IMR-90 (cell line): ENCODE measurements at regions of chr21 and their contacts with region 1.

Region 1: GRCh38 chr21:33751120-33751519 is 108.8 kb downstream of the ITSN1 start:
- DNase-seq: peak; percentile 19
- ATAC-seq: no peak
- H3K4me3 ChIP-seq: no peak overlapping the region
- H3K27ac ChIP-seq: no peak overlapping the region
- H3K4me1 ChIP-seq: no peaks in the 10 kb centered on the region
- H3K27me3 ChIP-seq: no peaks in the 10 kb centered on the region
- CTCF ChIP-seq: no peak
- POLR2A ChIP-seq: no peak
- RAD21 ChIP-seq: no peak

Region 2: DNA sequence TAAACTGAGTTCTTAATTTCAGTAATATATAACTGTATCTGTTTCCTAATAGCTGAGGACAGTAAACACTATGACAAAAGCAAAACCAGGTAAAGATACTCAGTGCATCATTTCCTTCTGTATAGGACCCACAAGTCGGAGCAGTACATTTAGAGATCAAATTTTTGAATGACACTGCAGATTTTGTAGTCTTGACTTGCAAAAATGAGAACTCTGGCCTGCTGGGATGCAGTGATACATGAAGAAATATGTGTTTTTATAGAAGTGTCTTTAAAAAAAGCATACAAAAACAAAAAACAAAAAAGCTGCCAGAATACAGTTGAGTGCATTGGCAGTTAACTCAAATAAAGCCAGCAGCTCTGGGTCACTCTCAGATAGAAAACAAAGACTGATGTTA is 228.2 kb before region 1 on chr21:
- CTCF ChIA-PET with region 1: no interaction called
- POLR2A ChIA-PET with region 1: no interaction called
- dilution Hi-C with region 1: no loop called
- in situ Hi-C with region 1: no loop called
- intact Hi-C with region 1: no loop called
- DNase-seq: no peak
- ATAC-seq: no peak
- H3K4me3 ChIP-seq: no peak overlapping the region
- H3K27ac ChIP-seq: no peak overlapping the region
- H3K4me1 ChIP-seq: no peaks in the 10 kb centered on the region
- H3K27me3 ChIP-seq: no peaks in the 10 kb centered on the region
- CTCF ChIP-seq: no peak
- POLR2A ChIP-seq: no peak
- RAD21 ChIP-seq: no peak

Region 3: GRCh38 chr21:33608559-33608958 is 142.6 kb before region 1 on chr21:
- CTCF ChIA-PET with region 1: no interaction called
- POLR2A ChIA-PET with region 1: no interaction called
- dilution Hi-C with region 1: no loop called
- in situ Hi-C with region 1: no loop called
- intact Hi-C with region 1: no loop called
- DNase-seq: peak; percentile 65
- ATAC-seq: peak; percentile 70
- H3K4me3 ChIP-seq: no peak overlapping the region
- H3K27ac ChIP-seq: no peak overlapping the region; the same call in 1 of the 2 replicates
- H3K4me1 ChIP-seq: no peaks in the 10 kb centered on the region
- H3K27me3 ChIP-seq: no peaks in the 10 kb centered on the region
- CTCF ChIP-seq: no peak
- POLR2A ChIP-seq: no peak
- RAD21 ChIP-seq: no peak

Region 4: DNA sequence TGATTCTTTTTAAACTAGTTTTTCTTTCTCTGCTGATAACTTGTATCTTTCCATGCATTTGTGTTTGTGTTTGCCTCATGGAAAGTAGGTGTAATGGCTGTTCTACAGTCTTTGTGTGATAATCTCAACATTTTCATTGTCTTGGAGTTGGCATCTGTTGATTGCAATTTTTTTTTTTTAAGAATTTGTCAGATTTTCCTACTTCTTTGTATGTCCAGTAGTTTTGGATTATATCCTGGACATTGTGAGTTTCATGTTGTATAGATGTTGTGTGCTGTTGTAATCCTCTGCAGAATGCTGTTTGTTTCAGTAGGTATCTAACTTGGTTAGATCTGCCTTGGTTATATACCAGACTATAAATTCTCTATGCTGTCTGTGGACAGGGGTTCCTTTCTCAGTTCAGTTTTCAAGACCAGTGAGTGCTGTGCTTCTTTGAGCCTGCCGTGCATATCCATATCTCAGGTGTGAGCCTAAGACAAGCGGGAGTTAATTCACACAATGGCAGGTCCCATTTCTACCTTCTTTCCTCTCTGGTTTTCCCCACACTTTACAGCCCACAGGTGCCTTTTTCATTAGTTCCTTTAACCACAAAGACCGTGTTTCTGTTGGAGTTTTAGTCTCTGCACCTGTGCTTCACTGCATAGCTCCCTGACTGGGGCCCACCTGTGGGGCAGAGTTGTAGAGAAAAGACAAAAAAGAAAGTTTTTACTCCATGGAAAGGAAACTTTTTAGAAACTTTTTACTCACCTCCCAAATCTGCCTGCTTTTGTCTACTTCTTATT is 38.9 kb before region 1 on chr21:
- CTCF ChIA-PET with region 1: no interaction called
- POLR2A ChIA-PET with region 1: no interaction called
- dilution Hi-C with region 1: no loop called
- in situ Hi-C with region 1: no loop called
- intact Hi-C with region 1: loop called (anchors 5 kb)
- DNase-seq: no peak
- ATAC-seq: no peak
- H3K4me3 ChIP-seq: no peak overlapping the region
- H3K27ac ChIP-seq: no peak overlapping the region
- H3K4me1 ChIP-seq: peaks cover 2% of the 10 kb centered on the region
- H3K27me3 ChIP-seq: no peaks in the 10 kb centered on the region
- CTCF ChIP-seq: no peak
- POLR2A ChIP-seq: no peak
- RAD21 ChIP-seq: no peak